Activated T-helper 1 cell treated with anti-CD3 and anti-CD28 coated beads, Interleukin-12 subunit alpha, Interleukin-12 subunit beta, Interleukin-2, Interleukin-4 antibody, amounts not matched to agents 30 ng/mL and 10 ng/mL and 1 ng/mL, durations not matched to agents 14 hours and 24 hours and 36 hours (primary cell): ENCODE measurements at regions of chr19 and their contacts with region 1.

Region 1: DNA sequence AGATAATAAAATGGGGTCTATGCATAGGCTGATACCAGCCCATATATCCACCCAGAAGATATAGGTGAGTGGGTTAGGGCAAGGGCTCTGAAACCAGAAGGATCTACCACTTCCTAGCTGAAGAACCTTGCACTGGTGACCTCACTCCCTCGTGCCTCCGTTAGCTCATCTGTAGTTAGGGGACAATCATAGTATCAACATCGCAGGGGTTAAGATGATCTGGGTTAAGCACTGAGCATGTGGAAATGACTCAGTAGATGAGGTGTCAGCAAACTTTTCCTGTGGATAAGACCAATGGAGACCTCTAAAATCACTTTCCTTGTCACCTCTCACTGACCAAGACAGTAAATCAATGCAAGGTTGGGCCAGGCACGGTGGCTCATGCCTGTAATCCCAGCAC is 30.5 kb downstream of the TNFSF14 start:
- DNase-seq: no peak
- H3K4me3 Mint-ChIP-seq: peak overlapping the region; percentile 37
- H3K27ac Mint-ChIP-seq: peak overlapping the region; percentile 45
- H3K4me1 Mint-ChIP-seq: peaks cover 44% of the 10 kb centered on the region
- H3K27me3 Mint-ChIP-seq: peaks cover 3% of the 10 kb centered on the region

Region 2: GRCh38 chr19:6164906-6165531 is 474.4 kb before region 1 on chr19:
- intact Hi-C with region 1: no loop called
- DNase-seq: no peak
- H3K4me3 Mint-ChIP-seq: no peak overlapping the region
- H3K27ac Mint-ChIP-seq: no peak overlapping the region
- H3K4me1 Mint-ChIP-seq: peaks cover 11% of the 10 kb centered on the region
- H3K27me3 Mint-ChIP-seq: peaks cover 2% of the 10 kb centered on the region

Region 3: GRCh38 chr19:6654347-6655310 is 15.2 kb after region 1 on chr19:
- intact Hi-C with region 1: loop called (anchors 1 kb)
- DNase-seq: peak; percentile 55
- H3K4me3 Mint-ChIP-seq: peak overlapping the region; percentile 75
- H3K27ac Mint-ChIP-seq: peak overlapping the region; percentile 98
- H3K4me1 Mint-ChIP-seq: peaks cover 76% of the 10 kb centered on the region
- H3K27me3 Mint-ChIP-seq: no peaks in the 10 kb centered on the region